ENCODE measurements at regions of chr2 and their contacts with region 1.

Region 1: GRCh38 chr2:72887754-72888437 is 688 bp downstream of the SPR start:
- DNase-seq: peak; percentile 68
- H3K4me3 ChIP-seq: peak overlapping the region; percentile 71
- H3K27ac ChIP-seq: peak overlapping the region; percentile 52
- H3K27me3 ChIP-seq: peaks cover 2% of the 10 kb centered on the region
- CTCF ChIP-seq: peak; percentile 99

Region 2: DNA sequence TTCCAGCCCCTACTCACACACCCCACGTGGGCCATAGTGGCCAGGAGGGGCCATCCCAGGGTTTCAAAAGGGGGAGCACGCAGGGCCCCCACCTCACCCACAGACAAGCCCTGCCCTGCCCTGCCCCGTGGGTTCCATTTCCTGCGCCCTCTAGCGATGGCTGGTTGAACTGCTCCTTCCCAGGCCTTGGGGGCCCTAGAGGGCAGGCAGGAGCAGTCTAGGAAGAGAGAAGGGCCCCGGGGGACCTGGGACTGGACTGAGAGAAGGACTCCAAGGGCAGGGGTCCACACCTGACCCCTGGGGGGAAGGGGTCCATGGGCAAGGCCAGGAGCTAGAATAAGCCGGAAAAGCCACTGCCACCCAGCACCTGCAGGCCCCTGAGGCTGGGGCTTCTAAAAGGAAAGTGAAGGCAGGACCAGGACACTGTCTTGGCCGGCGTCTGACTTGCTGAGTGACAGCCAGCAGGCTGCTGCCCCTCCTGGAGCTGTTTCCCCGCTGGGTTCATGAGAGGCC is 750.3 kb before region 1 on chr2:
- CTCF ChIA-PET with region 1: no interaction called
- POLR2A ChIA-PET with region 1: no interaction called
- DNase-seq: no peak
- H3K4me3 ChIP-seq: no peak overlapping the region
- H3K27ac ChIP-seq: no peak overlapping the region
- H3K27me3 ChIP-seq: peaks cover 29% of the 10 kb centered on the region
- CTCF ChIP-seq: peak; percentile 92

Region 3: DNA sequence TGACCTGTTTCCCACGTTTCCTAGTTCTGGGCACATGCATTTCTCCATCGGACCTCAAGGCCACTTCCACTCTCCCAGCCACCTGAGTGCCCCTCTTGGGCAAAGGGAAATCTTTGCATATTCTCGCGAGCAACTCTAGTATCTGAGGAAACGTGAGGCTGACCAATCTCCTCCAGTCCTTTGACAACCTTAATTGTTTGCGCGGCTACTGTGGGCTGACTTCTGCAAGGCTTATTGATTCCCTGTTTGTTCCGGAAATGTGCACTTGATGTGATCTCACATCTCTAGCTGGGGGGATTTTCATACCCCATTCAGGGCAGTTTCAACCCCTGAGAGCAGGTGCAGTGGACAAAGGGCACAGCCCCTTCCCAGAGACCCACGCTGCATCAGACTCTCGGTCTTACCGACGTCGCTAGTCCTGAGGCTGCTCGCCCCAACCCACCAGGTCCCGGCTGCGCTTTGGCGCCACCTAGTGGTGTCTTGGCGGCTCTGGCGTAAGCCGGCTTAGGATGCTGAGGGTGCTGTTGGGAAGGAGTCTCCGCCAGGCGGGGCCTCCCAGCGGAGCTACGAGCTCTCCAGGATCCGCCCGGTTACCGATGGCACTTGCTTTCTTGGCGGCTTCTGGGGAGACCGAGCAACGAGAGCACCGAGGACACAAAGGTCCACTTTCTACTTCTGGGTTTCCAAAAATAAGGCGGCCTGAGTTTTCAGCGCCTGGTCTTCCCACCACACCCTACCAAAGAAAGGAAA is 25.5 kb before region 1 on chr2:
- CTCF ChIA-PET with region 1: interaction called, 34 read pairs
- POLR2A ChIA-PET with region 1: no interaction called
- DNase-seq: peak; percentile 75
- H3K4me3 ChIP-seq: peak overlapping the region; percentile 50
- H3K27ac ChIP-seq: no peak overlapping the region
- H3K27me3 ChIP-seq: peaks cover 10% of the 10 kb centered on the region
- CTCF ChIP-seq: peak; percentile 100

Region 4: GRCh38 chr2:72924353-72925240 is 36.7 kb after region 1 on chr2:
- CTCF ChIA-PET with region 1: interaction called, 16 read pairs
- POLR2A ChIA-PET with region 1: interaction called, 4 read pairs
- DNase-seq: no peak
- H3K4me3 ChIP-seq: no peak overlapping the region
- H3K27ac ChIP-seq: no peak overlapping the region
- H3K27me3 ChIP-seq: peaks cover 100% of the 10 kb centered on the region
- CTCF ChIP-seq: no peak

Region 5: GRCh38 chr2:73063909-73064875 is 176.3 kb after region 1 on chr2:
- CTCF ChIA-PET with region 1: interaction called, 20 read pairs
- POLR2A ChIA-PET with region 1: no interaction called
- DNase-seq: peak; percentile 43
- H3K4me3 ChIP-seq: no peak overlapping the region
- H3K27ac ChIP-seq: peak overlapping the region; percentile 94
- H3K27me3 ChIP-seq: no peaks in the 10 kb centered on the region
- CTCF ChIP-seq: no peak

Region 6: DNA sequence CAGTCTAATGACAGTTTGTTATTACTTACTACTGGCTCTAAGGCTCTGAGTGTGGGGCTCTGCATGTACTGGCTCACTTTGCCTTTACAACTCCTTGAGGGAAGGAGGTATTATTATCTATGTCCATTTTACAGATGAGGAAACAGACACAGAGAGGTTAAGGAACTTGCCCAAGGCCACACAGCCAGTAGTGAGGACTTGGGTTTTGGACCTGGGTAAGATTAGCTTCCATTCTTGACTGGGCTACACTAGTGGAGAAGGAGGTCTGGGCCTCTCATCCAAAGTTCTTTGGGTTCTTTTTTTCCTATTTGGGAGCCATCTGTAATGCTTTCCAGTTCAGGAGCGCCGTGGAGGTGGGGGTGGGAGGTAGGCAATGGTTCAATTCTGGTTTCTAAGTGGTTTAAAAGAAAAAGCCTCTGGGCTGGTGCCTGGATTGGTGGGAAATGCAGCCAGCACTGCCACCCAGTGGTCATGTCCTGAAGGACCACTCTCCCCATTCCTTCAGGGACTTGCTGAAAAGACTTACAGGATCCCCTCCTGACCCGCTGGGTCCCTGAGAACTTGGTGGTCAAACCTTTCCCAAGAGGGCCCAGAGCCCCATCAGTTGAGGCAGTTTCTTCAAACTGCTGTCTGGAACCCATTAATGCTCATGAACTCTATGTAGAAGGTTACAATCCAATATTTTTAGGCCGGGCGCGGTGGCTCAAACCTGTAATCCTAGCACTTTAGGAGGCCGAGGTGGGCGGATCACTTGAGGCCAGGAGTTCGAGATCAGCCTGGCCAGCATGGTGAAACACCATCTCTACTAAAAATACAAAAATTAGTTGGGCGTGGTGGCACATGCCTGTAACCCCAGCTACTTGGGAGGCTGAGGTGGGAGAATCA is 275.8 kb after region 1 on chr2:
- CTCF ChIA-PET with region 1: interaction called, 41 read pairs
- POLR2A ChIA-PET with region 1: no interaction called
- DNase-seq: peak; percentile 62
- H3K4me3 ChIP-seq: no peak overlapping the region
- H3K27ac ChIP-seq: no peak overlapping the region
- H3K27me3 ChIP-seq: peaks cover 5% of the 10 kb centered on the region
- CTCF ChIP-seq: peak; percentile 94